ENCODE measurements at regions of chr17 and their contacts with region 1.

Region 1: DNA sequence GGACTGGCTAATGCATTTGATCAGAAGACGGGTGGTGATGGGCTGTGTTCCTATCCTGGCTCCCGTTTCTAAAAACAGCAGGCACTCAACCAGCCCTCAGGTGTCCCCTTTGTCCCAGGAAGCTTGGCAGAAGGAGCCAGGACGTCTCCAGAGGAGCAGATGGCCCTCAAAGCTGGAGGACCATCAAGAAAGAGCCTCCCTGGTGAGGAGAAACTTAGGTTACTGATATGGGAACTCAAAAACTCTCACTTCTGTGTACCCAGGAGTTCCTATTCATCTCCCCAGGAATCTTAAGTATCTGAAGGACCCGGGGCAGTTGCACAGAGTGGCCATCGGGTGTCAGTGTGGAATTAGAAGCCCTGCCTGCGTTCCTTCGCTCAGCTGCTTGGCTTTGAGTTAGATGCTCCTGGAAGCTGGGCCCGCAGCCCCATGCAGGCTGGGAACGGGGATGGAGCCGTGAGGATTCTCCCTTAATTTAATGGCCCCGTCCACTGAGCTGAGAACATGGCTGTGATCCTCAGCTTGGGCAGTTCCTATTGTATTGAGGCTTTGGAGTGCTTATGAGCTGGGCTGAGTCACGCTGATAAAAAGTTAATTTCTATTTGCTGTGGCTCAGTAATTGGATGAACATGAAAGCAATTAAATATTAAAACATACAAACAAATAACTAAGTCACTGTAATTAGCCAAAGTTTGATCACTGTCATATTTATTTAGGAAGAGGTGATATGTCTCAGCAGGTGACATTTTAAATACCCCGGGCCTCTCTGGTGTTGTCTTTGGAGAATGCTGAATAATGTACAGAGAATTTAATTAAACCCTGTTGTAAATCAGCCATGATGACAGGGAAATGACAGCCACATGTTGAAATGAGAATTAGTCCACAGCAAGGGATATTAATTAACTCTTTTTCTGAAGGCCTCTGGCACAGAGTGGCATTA is 402.1 kb downstream of the SEC14L1 start:
- DNase-seq: peak; percentile 80
- ATAC-seq: peak; percentile 94
- H3K4me3 Mint-ChIP-seq: no peak overlapping the region
- H3K27ac Mint-ChIP-seq: no peak overlapping the region
- H3K4me1 Mint-ChIP-seq: no peaks in the 10 kb centered on the region
- H3K27me3 Mint-ChIP-seq: no peaks in the 10 kb centered on the region
- CTCF ChIP-seq: peak; percentile 93

Region 2: GRCh38 chr17:76917829-76918228 is 625.0 kb before region 1 on chr17:
- CTCF ChIA-PET with region 1: no interaction called
- POLR2A ChIA-PET with region 1: no interaction called
- intact Hi-C with region 1: no loop called
- DNase-seq: no peak
- ATAC-seq: no peak
- H3K4me3 Mint-ChIP-seq: no peak overlapping the region
- H3K27ac Mint-ChIP-seq: no peak overlapping the region
- H3K4me1 Mint-ChIP-seq: no peaks in the 10 kb centered on the region
- H3K27me3 Mint-ChIP-seq: no peaks in the 10 kb centered on the region
- CTCF ChIP-seq: no peak

Region 3: GRCh38 chr17:77553459-77554066 is 10.7 kb after region 1 on chr17:
- CTCF ChIA-PET with region 1: interaction called, 12 read pairs
- POLR2A ChIA-PET with region 1: no interaction called
- intact Hi-C with region 1: no loop called
- DNase-seq: no peak
- ATAC-seq: no peak
- H3K4me3 Mint-ChIP-seq: no peak overlapping the region
- H3K27ac Mint-ChIP-seq: no peak overlapping the region
- H3K4me1 Mint-ChIP-seq: no peaks in the 10 kb centered on the region
- H3K27me3 Mint-ChIP-seq: no peaks in the 10 kb centered on the region
- CTCF ChIP-seq: no peak

Region 4: GRCh38 chr17:77741109-77741508 is 198.3 kb after region 1 on chr17:
- CTCF ChIA-PET with region 1: interaction called, 13 read pairs
- POLR2A ChIA-PET with region 1: no interaction called
- intact Hi-C with region 1: no loop called
- DNase-seq: peak; percentile 64
- ATAC-seq: peak; percentile 30
- H3K4me3 Mint-ChIP-seq: no peak overlapping the region
- H3K27ac Mint-ChIP-seq: no peak overlapping the region
- H3K4me1 Mint-ChIP-seq: no peaks in the 10 kb centered on the region
- H3K27me3 Mint-ChIP-seq: no peaks in the 10 kb centered on the region
- CTCF ChIP-seq: peak; percentile 65

Region 5: GRCh38 chr17:77772461-77772897 is 229.7 kb after region 1 on chr17:
- CTCF ChIA-PET with region 1: interaction called, 9 read pairs
- POLR2A ChIA-PET with region 1: no interaction called
- intact Hi-C with region 1: loop called (anchors 10 kb)
- DNase-seq: peak; percentile 78
- ATAC-seq: peak; percentile 97
- H3K4me3 Mint-ChIP-seq: no peak overlapping the region
- H3K27ac Mint-ChIP-seq: no peak overlapping the region
- H3K4me1 Mint-ChIP-seq: peaks cover 12% of the 10 kb centered on the region
- H3K27me3 Mint-ChIP-seq: no peaks in the 10 kb centered on the region
- CTCF ChIP-seq: peak; percentile 76

Region 6: DNA sequence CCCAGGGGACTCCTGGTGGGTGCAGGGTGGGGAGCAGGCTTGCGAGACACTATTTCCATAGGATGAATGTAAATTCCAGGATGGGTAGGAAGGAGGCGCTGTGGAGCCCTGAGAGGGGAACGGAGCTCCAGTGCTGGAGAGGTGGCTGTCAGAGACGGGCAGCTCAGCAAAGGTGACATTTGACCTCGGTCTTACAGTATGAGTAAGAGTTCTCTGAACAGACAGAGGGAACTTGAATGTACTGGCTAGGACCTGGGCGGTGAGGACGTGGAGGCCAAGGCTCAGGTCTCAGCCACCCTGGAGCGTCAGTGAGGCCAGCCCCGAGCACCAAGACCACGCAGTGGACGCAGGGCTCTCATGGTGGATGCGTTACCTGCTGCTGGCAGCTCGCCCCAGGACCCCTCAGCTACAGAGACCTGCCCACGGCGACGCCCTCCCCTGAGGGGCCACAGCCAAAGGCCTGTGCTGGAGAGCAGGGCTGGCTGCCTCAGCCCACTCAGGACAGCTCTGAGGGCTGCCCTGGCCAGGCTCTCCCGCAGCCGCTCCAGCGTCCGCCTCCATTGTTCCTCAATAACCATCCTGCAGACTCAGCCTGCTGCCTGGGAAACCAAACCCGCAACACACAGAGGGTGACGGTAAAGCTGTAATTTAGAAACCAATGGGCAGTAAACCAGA is 349.8 kb after region 1 on chr17:
- CTCF ChIA-PET with region 1: no interaction called
- POLR2A ChIA-PET with region 1: no interaction called
- intact Hi-C with region 1: no loop called
- DNase-seq: peak; percentile 40
- ATAC-seq: no peak
- H3K4me3 Mint-ChIP-seq: no peak overlapping the region
- H3K27ac Mint-ChIP-seq: no peak overlapping the region
- H3K4me1 Mint-ChIP-seq: peaks cover 27% of the 10 kb centered on the region
- H3K27me3 Mint-ChIP-seq: no peaks in the 10 kb centered on the region
- CTCF ChIP-seq: peak; percentile 22

Measured in activated CD8-positive, alpha-beta T cell treated with anti-CD3 and anti-CD28 coated beads for 36 hours (primary cell).